Activated naive CD4-positive, alpha-beta T cell treated with anti-CD3 and anti-CD28 coated beads for 36 hours (primary cell): ENCODE measurements at regions of chr4 and their contacts with region 1.

Region 1: DNA sequence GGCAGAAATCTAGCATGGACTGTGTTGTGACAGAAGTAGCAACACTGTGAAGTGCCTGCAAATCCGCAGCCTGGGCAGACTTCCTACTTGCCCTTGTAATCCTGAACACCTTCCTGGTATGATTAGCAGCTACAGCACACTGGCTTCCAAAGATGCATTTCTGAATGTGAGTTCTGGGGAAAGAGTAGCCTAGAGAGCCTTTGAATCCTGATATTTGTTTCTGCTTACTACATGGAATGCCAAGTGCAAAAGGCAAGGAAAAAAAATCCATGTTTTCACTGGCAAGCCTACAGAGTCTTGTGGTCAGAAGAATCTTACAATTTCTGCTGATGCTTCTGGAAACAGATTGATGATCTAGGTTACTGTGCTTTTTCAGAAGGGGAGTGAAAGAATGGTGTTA is 223.7 kb downstream of the COL25A1 start:
- DNase-seq: no peak
- H3K4me3 Mint-ChIP-seq: no peak overlapping the region
- H3K27ac Mint-ChIP-seq: no peak overlapping the region
- H3K4me1 Mint-ChIP-seq: peaks cover 13% of the 10 kb centered on the region
- H3K27me3 Mint-ChIP-seq: no peaks in the 10 kb centered on the region

Region 2: GRCh38 chr4:108454227-108454626 is 624.5 kb before region 1 on chr4:
- CTCF ChIA-PET with region 1: no interaction called
- intact Hi-C with region 1: no loop called
- DNase-seq: no peak
- H3K4me3 Mint-ChIP-seq: no peak overlapping the region
- H3K27ac Mint-ChIP-seq: no peak overlapping the region
- H3K4me1 Mint-ChIP-seq: peaks cover 3% of the 10 kb centered on the region
- H3K27me3 Mint-ChIP-seq: no peaks in the 10 kb centered on the region

Region 3: GRCh38 chr4:109294006-109294405 is 215.3 kb after region 1 on chr4:
- CTCF ChIA-PET with region 1: interaction called, 3 read pairs
- intact Hi-C with region 1: loop called (anchors 2 kb)
- DNase-seq: peak; percentile 58
- H3K4me3 Mint-ChIP-seq: no peak overlapping the region
- H3K27ac Mint-ChIP-seq: no peak overlapping the region
- H3K4me1 Mint-ChIP-seq: no peaks in the 10 kb centered on the region
- H3K27me3 Mint-ChIP-seq: peaks cover 12% of the 10 kb centered on the region

Region 4: GRCh38 chr4:109406338-109406931 is 327.7 kb after region 1 on chr4:
- CTCF ChIA-PET with region 1: no interaction called
- intact Hi-C with region 1: loop called (anchors 1 kb)
- DNase-seq: peak; percentile 52
- H3K4me3 Mint-ChIP-seq: no peak overlapping the region
- H3K27ac Mint-ChIP-seq: no peak overlapping the region
- H3K4me1 Mint-ChIP-seq: no peaks in the 10 kb centered on the region
- H3K27me3 Mint-ChIP-seq: no peaks in the 10 kb centered on the region